Ovary (tissue), 10 donors: ENCODE measurements at regions of chr3 and their contacts with region 1.

Region 1: DNA sequence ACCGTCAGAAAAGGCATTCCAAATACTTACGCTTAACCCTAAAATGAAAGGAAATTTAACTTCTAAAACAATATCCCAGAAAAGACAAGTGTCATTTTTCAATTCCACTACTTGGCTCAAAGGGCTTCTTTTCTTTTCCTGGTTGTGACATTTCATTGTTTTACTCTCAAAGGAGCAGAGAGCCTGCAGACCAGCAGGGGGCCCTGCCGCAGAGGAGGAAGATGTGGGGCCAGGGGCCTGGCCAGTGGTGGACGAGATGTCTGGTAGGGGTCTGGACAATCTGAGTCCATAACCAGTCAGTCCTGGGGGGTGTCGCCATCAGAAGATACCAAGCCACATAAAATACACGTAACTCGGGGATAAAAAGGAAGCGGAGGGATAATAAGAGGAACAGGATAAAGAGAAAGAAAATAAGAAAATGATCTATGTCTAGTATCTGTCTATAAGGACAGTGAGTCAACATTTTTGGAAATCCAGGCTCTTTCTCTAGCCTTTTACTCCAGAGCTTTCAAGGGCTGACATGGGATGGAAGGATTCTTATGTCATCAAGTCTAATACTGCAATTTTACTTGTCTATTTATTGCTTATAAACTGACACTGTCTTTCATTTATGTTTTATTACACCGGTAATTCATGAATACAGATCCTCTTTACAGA is 54.2 kb upstream of the ARHGEF3 start:
- DNase-seq: peak in 2 of 5 donors; percentile 27 to 36
- H3K4me3 ChIP-seq: no peak overlapping the region
- H3K27ac ChIP-seq: no peak overlapping the region
- H3K4me1 ChIP-seq: no peaks in the 10 kb centered on the region
- H3K27me3 ChIP-seq: no peaks in the 10 kb centered on the region
- CTCF ChIP-seq: peak in 1 of 3 donors; percentile 21
- EP300 ChIP-seq: no peak
- POLR2A ChIP-seq: no peak

Region 2: DNA sequence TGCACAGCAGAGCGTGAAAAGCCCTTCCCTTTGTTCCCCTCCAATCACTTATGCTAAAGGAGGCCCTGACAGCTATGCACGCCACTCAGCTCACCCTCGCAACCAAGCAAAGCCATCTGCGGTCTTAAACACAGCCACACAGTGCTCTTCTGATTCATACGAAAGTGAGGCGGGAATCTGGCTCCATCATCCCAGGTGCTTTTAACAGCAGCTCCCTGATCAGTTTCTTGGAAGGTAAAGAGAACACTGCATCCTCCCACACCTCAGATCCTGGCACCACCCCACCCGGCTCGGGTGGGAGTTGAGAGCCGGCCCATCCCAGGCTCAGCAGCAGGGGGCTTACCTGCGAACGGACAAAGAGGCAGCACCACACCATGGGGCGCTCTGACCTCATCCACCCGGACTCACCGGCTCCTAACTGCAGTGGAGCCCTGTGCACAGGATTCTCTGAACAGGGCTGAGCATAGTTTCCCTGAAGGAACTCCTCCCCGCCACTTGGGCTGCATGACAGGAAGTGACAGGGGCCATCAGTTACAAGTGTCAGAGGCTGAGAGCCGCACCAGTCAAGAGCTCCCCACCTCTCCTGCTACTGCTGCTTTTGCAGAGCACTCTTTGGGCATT is 60.1 kb after region 1 on chr3:
- intact Hi-C with region 1: loop called in 1 of 4 experiments (anchors 10 kb)
- DNase-seq: no peak
- H3K4me3 ChIP-seq: no peak overlapping the region
- H3K27ac ChIP-seq: no peak overlapping the region
- H3K4me1 ChIP-seq: no peaks in the 10 kb centered on the region
- H3K27me3 ChIP-seq: no peaks in the 10 kb centered on the region
- CTCF ChIP-seq: no peak
- EP300 ChIP-seq: no peak
- POLR2A ChIP-seq: no peak

Region 3: GRCh38 chr3:56928379-56929068 is 72.5 kb after region 1 on chr3:
- intact Hi-C with region 1: no loop called
- DNase-seq: no peak
- H3K4me3 ChIP-seq: no peak overlapping the region
- H3K27ac ChIP-seq: no peak overlapping the region
- H3K4me1 ChIP-seq: peaks cover 6% of the 10 kb centered on the region
- H3K27me3 ChIP-seq: no peaks in the 10 kb centered on the region
- CTCF ChIP-seq: no peak
- EP300 ChIP-seq: no peak
- POLR2A ChIP-seq: no peak